AG04449 (cell line): ENCODE measurements at regions of chr9 and their contacts with region 1.

Region 1: DNA sequence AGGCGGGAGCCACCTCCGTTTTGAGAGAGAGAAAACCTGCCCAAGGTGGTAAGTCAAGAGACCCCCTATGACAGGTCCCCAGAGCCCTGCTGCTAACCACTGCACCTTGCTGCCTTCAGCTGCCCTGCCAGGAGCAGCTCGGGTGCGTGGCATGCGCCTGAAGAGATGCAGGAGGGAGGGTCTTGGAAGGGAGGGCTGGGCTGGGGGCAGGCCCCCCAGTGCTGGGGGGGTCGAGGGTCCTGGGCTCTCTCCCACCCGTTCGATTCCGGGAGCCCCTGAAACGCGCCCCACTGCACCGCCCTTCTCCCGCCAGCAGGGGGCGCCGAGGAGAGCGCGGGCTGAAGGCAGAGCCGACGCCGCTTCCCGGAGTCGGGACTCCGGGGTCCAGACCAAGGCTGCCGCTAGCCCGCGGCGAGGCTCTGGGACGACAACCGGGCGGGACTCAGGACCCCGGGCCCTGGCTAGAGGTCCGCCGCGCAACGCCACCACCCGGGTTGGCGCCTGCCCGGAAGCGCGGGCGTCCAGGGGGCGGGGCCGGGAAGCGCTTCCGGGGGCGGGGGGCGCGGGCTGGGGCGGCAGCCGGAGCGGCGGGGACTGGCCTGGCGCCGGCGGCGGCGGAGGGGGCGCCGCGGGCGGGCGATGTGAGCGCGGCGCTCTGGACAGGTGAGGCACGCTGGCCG is at the start of gene ZBTB34:
- DNase-seq: no peak
- H3K4me3 ChIP-seq: peak within 1 kb of the TSS; percentile 83
- CTCF ChIP-seq: peak; percentile 97

Region 2: GRCh38 chr9:126838895-126839294 is 21.3 kb before region 1 on chr9:
- CTCF ChIA-PET with region 1: interaction called, 26 read pairs
- POLR2A ChIA-PET with region 1: no interaction called
- DNase-seq: no peak
- H3K4me3 ChIP-seq: no peak overlapping the region
- CTCF ChIP-seq: no peak

Region 3: DNA sequence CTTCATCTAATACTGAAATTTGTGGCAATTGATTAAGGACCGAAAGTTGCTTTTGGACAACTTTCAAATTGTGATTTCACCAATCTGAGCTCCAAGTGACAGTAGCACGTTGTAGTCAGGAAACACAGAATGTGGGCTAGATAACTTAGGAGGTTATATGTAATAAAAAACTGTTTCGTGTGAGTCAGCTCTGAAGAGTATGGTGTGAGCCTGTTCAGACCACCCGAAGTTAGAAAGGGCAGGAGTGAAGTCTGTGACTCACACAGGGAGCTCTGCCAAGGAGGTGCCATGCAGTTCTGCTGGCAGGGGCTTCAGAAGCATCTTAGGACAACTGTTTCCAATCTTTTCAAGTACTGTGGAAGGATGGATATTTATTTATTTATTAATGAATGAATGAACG is 16.1 kb before region 1 on chr9:
- CTCF ChIA-PET with region 1: interaction called, 42 read pairs
- POLR2A ChIA-PET with region 1: no interaction called
- DNase-seq: peak; percentile 24
- H3K4me3 ChIP-seq: no peak overlapping the region
- CTCF ChIP-seq: no peak

Region 4: GRCh38 chr9:126956917-126957686 is 96.9 kb after region 1 on chr9:
- CTCF ChIA-PET with region 1: no interaction called
- POLR2A ChIA-PET with region 1: no interaction called
- DNase-seq: no peak
- H3K4me3 ChIP-seq: no peak overlapping the region
- CTCF ChIP-seq: no peak